Activated CD4-positive, alpha-beta memory T cell treated with anti-CD3 and anti-CD28 coated beads for 36 hours (primary cell): ENCODE measurements at regions of chr17 and their contacts with region 1.

Region 1: DNA sequence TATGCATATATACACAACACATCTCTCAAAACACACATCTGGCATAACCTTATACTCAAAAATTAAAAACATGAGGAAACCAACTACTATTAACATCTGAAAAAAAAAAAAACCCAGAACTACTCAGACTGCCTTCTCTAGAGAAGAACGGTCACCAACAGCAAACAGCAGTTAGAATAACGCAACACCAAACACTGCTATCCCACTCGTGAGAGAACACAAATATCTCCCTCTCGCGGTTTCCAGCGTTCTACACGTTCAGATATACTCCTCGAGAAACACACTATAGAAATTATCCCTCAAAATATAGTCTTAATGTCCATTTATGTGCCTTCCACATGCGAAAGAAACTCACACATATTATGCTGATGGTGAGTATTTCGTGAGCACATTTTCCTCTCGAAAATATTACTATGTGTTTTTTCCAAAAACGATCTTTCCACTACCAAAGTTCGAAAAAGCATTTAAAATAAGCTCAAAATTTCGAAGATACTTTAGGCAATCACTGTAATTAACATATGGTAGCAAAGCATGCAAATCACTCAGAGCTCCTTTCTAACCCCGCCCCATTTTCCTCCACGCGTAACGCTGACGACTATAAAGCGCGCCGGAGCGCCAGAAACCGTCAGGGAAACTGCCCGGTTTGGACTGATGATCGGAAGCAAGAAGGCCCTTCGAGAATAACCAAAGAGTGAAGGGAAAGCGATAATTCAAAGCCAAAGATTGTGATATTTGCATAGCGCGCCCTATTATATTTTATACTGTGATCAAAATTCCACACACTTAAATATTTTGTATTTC is 60.1 kb downstream of the TEX14 start:
- DNase-seq: peak; percentile 98
- H3K4me3 Mint-ChIP-seq: no peak overlapping the region
- H3K27ac Mint-ChIP-seq: no peak overlapping the region
- H3K4me1 Mint-ChIP-seq: peaks cover 3% of the 10 kb centered on the region
- H3K27me3 Mint-ChIP-seq: no peaks in the 10 kb centered on the region

Region 2: GRCh38 chr17:58517734-58518609 is 113.8 kb before region 1 on chr17:
- CTCF ChIA-PET with region 1: interaction called, 19 read pairs
- POLR2A ChIA-PET with region 1: interaction called, 62 read pairs
- intact Hi-C with region 1: loop called (anchors 1 kb)
- DNase-seq: peak; percentile 100
- H3K4me3 Mint-ChIP-seq: peak overlapping the region; percentile 91
- H3K27ac Mint-ChIP-seq: peak overlapping the region; percentile 95
- H3K4me1 Mint-ChIP-seq: peaks cover 32% of the 10 kb centered on the region
- H3K27me3 Mint-ChIP-seq: no peaks in the 10 kb centered on the region

Region 3: GRCh38 chr17:58595326-58595725 is 36.4 kb before region 1 on chr17:
- CTCF ChIA-PET with region 1: no interaction called
- POLR2A ChIA-PET with region 1: interaction called, 15 read pairs
- intact Hi-C with region 1: no loop called
- DNase-seq: no peak
- H3K4me3 Mint-ChIP-seq: no peak overlapping the region
- H3K27ac Mint-ChIP-seq: no peak overlapping the region
- H3K4me1 Mint-ChIP-seq: no peaks in the 10 kb centered on the region
- H3K27me3 Mint-ChIP-seq: no peaks in the 10 kb centered on the region

Region 4: DNA sequence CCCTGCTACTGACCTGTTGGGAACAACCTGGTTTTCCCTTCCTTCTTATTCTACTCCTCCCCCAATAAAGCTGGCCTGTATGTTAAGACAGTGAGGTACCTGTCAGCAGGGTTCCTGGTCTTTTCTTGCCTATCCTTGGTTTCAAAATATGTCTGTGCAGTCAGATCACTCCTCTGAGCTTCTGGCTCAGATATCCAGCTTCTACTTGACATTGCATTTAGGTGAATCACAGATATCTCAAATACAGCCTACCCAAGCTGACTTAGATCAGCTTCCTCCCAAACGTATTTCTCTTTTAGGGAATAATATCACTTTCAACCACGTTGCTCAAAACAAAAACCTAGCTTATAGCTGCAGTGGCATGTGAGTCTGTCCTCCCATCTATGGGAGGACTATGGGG is 11.4 kb after region 1 on chr17:
- CTCF ChIA-PET with region 1: interaction called, 3 read pairs
- POLR2A ChIA-PET with region 1: interaction called, 81 read pairs
- intact Hi-C with region 1: no loop called
- DNase-seq: no peak
- H3K4me3 Mint-ChIP-seq: no peak overlapping the region
- H3K27ac Mint-ChIP-seq: no peak overlapping the region
- H3K4me1 Mint-ChIP-seq: no peaks in the 10 kb centered on the region
- H3K27me3 Mint-ChIP-seq: no peaks in the 10 kb centered on the region

Region 5: DNA sequence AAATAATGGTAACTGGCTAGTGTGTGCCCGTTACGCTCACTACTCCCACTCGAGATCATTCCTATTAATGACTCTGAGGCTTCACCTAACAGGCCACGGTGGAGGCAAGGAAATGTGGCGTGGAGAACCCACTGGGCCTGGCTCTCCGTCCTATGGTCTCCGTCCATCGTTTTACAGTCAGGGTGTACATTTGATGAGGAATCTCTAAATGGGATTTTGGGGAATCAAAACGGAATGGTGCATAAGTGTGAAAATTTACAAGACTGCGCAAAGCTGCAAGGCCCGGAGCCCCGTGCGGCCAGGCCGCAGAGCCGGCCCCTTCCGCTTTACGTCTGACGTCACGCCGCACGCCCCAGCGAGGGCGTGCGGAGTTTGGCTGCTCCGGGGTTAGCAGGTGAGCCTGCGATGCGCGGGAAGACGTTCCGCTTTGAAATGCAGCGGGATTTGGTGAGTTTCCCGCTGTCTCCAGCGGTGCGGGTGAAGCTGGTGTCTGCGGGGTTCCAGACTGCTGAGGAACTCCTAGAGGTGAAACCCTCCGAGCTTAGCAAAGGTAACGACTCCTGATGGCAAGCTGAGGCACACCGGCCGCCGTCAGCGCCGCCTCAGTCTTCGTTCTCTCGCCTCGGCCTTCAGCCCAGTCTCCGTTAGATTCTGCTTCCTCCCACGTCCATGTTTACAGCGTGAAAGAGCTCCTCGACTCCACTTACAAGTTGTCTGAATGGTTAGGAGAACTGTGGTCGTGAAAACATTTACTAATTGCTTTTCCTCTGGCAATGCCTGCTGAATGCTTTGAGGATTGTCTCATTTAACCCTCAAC is 60.7 kb after region 1 on chr17 and contains the start of gene RAD51C:
- CTCF ChIA-PET with region 1: interaction called, 4 read pairs
- POLR2A ChIA-PET with region 1: interaction called, 40 read pairs
- intact Hi-C with region 1: loop called (anchors 2 kb)
- DNase-seq: peak; percentile 93
- H3K4me3 Mint-ChIP-seq: peak within 1 kb of the TSS; percentile 99
- H3K27ac Mint-ChIP-seq: peak within 1 kb of the TSS; percentile 96
- H3K4me1 Mint-ChIP-seq: peaks cover 25% of the 10 kb centered on the region
- H3K27me3 Mint-ChIP-seq: no peaks in the 10 kb centered on the region
- total RNA-seq, gene RAD51C: 64.0 to 66.0 TPM

Region 6: GRCh38 chr17:59155439-59156182 is 523.9 kb after region 1 on chr17 and contains the start of gene PRR11:
- CTCF ChIA-PET with region 1: no interaction called
- POLR2A ChIA-PET with region 1: interaction called, 8 read pairs
- intact Hi-C with region 1: loop called (anchors 1 kb)
- DNase-seq: peak; percentile 97
- H3K4me3 Mint-ChIP-seq: no peak within 1 kb of the TSS
- H3K27ac Mint-ChIP-seq: no peak within 1 kb of the TSS
- H3K4me1 Mint-ChIP-seq: peaks cover 37% of the 10 kb centered on the region
- H3K27me3 Mint-ChIP-seq: no peaks in the 10 kb centered on the region
- total RNA-seq, gene PRR11: 67.3 to 70.2 TPM